Activated CD4-positive, alpha-beta T cell treated with anti-CD3 and anti-CD28 coated beads for 36 hours (primary cell): ENCODE measurements at regions of chr5 and their contacts with region 1.

Region 1: GRCh38 chr5:165244407-165244806 is 1739.0 kb downstream of the MAT2B start:
- DNase-seq: no peak
- ATAC-seq: no peak
- H3K4me3 Mint-ChIP-seq: no peak overlapping the region
- H3K27ac Mint-ChIP-seq: no peak overlapping the region
- H3K4me1 Mint-ChIP-seq: no peaks in the 10 kb centered on the region
- H3K27me3 Mint-ChIP-seq: no peaks in the 10 kb centered on the region

Region 2: GRCh38 chr5:165196961-165197360 is 47.4 kb before region 1 on chr5:
- CTCF ChIA-PET with region 1: no interaction called
- POLR2A ChIA-PET with region 1: no interaction called
- intact Hi-C with region 1: no loop called
- DNase-seq: no peak
- ATAC-seq: no peak
- H3K4me3 Mint-ChIP-seq: no peak overlapping the region
- H3K27ac Mint-ChIP-seq: no peak overlapping the region
- H3K4me1 Mint-ChIP-seq: no peaks in the 10 kb centered on the region
- H3K27me3 Mint-ChIP-seq: no peaks in the 10 kb centered on the region

Region 3: GRCh38 chr5:165209086-165209727 is 35.2 kb before region 1 on chr5:
- CTCF ChIA-PET with region 1: no interaction called
- POLR2A ChIA-PET with region 1: no interaction called
- intact Hi-C with region 1: no loop called
- DNase-seq: no peak
- ATAC-seq: no peak
- H3K4me3 Mint-ChIP-seq: no peak overlapping the region
- H3K27ac Mint-ChIP-seq: no peak overlapping the region
- H3K4me1 Mint-ChIP-seq: no peaks in the 10 kb centered on the region
- H3K27me3 Mint-ChIP-seq: no peaks in the 10 kb centered on the region

Region 4: GRCh38 chr5:165425594-165425993 is 181.2 kb after region 1 on chr5:
- CTCF ChIA-PET with region 1: no interaction called
- POLR2A ChIA-PET with region 1: interaction called, 10 read pairs
- intact Hi-C with region 1: no loop called
- DNase-seq: no peak
- ATAC-seq: no peak
- H3K4me3 Mint-ChIP-seq: no peak overlapping the region
- H3K27ac Mint-ChIP-seq: no peak overlapping the region
- H3K4me1 Mint-ChIP-seq: no peaks in the 10 kb centered on the region
- H3K27me3 Mint-ChIP-seq: no peaks in the 10 kb centered on the region